ENCODE measurements at regions of chr18 and their contacts with region 1.

Region 1: DNA sequence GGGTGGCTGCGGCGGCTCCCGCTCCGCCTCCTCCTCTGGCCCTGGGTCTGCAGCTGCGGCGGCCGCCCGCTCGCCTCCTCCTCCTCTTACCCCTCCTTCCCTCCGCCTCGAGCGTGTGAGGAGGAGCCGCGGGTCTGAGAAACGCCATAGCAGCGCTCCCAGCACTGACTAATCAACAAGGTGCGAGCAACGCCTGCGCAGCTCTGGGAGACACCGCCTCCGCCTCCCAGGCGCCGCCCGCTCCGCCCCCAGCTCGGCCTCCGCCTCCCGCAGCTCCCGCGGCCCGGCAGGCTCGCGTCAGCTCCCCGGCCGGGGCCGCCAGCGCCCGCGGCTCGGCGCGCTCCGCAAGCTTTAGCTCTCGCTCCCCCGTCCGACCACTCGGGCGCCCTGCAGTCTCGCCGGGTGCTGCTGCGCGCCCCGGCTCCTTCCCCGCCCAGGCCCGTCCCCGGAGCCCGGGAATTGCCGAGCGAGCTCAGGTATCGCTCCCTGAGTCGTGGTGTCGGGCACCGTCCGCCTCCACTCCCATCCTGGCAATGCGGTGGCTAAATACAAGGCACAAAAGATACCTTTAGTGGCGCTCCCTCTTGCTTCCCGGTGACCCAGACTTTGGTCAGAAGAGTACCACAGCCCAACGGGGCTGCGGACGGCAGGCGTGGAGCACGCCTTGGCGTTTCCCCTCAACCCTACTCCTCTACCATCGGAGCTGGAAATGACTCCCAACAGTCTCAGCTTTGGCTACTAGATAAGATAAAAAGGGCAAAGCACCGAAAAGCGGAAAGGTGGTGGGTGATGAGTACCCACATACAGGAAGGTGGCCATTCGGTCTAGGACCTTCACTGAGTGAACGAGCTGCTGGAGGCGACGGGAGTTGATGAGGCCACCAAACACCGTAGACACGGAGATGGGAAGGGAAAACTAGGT is at the start of gene GAREM1:
- DNase-seq: peak; percentile 98
- H3K4me3 ChIP-seq: peak within 1 kb of the TSS; percentile 82 to 87 (median 82)
- H3K27ac ChIP-seq: peak within 1 kb of the TSS; percentile 91 to 94 (median 93)
- H3K4me1 ChIP-seq: peaks cover 0 to 30% (median 20%) of the 10 kb centered on the region in 4 donors
- H3K27me3 ChIP-seq: no peaks in the 10 kb centered on the region
- CTCF ChIP-seq: peak; percentile 33 to 82 (median 42)
- EP300 ChIP-seq: no peak
- POLR2A ChIP-seq: peak; percentile 47 to 64
- total RNA-seq, gene GAREM1: 5.3 to 9.7 (median 6.4) TPM

Region 2: DNA sequence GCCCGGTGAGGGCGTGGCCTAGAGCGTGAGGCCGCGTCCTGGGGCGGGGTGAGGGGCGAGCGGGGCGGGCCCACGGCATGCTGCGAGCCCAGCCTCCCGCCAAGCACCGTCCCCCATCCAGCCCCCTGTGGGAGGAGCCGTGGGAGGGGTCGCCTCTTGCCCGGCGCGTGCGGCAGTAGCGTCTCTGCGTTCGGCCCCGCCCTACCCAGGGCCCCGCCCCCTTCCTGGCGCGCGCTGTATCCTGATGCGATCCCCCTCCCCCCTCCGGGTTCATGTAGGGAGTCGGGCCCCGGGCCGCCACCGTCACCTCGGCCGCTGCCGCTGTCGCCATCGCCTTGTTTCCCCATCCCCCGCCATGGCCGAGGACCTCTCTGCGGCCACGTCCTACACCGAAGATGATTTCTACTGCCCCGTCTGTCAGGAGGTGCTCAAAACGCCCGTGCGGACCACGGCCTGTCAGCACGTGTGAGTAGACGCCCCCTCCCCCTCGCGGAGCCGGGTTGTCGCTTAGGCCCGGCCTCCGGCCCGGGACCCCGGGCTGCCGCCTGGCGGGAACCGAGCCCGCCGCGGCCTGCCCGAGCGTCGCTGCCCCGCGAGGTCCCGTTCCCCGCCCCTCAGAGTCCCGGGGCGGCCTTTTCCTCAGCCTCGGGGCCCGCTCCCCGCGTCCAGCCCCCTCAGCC is 378.4 kb before region 1 on chr18:
- intact Hi-C with region 1: loop called (anchors 2 kb)
- DNase-seq: peak; percentile 100
- H3K4me3 ChIP-seq: peak overlapping the region; percentile 69 to 95 (median 78)
- H3K27ac ChIP-seq: peak overlapping the region; percentile 94 to 100 (median 100)
- H3K4me1 ChIP-seq: peaks cover 0 to 37% (median 21%) of the 10 kb centered on the region in 4 donors
- H3K27me3 ChIP-seq: no peaks in the 10 kb centered on the region
- CTCF ChIP-seq: no peak
- EP300 ChIP-seq: peak in 1 of 4 donors; percentile 37
- POLR2A ChIP-seq: peak; percentile 33 to 54

Region 3: DNA sequence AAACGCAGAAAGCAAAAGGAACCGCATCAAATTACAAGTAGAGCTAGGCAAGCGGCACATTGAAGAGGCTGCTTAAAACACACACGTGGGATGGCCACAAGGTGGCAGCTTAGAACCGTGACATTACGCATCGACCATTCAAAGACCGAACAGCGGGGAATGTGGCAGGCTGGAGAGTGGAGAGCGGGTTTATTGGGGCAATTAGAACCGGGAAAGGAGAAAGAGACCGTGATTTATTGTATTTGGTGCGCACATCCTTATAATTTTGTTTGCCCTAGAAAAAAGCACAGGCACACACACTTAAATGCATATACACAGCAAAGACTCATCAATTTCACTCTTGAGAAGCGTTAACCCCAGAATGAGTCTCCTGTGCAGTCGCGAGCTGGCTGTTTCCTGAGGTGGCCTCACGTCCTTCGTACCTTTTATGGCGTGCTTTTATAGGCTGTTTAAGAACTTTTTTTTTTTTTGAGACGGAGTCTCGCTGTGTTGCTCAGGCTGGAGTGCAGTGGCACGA is 312.8 kb before region 1 on chr18:
- intact Hi-C with region 1: loop called (anchors 2 kb)
- DNase-seq: peak; percentile 87
- H3K4me3 ChIP-seq: peak overlapping the region; percentile 6 to 42 (median 34)
- H3K27ac ChIP-seq: no peak overlapping the region
- H3K4me1 ChIP-seq: peaks cover 0 to 10% (median 2%) of the 10 kb centered on the region in 4 donors
- H3K27me3 ChIP-seq: no peaks in the 10 kb centered on the region
- CTCF ChIP-seq: peak; percentile 71 to 84 (median 82)
- EP300 ChIP-seq: no peak
- POLR2A ChIP-seq: no peak

Region 4: GRCh38 chr18:32271672-32272208 is 199.2 kb before region 1 on chr18:
- intact Hi-C with region 1: loop called (anchors 1 kb)
- DNase-seq: no peak
- H3K4me3 ChIP-seq: no peak overlapping the region
- H3K27ac ChIP-seq: no peak overlapping the region
- H3K4me1 ChIP-seq: peaks cover 0 to 7% (median 0%) of the 10 kb centered on the region in 4 donors
- H3K27me3 ChIP-seq: no peaks in the 10 kb centered on the region
- CTCF ChIP-seq: peak; percentile 57 to 70 (median 60)
- EP300 ChIP-seq: no peak
- POLR2A ChIP-seq: no peak

Region 5: GRCh38 chr18:32289483-32290075 is 181.4 kb before region 1 on chr18:
- intact Hi-C with region 1: loop called (anchors 1 kb)
- DNase-seq: no peak
- H3K4me3 ChIP-seq: no peak overlapping the region
- H3K27ac ChIP-seq: no peak overlapping the region
- H3K4me1 ChIP-seq: no peaks in the 10 kb centered on the region
- H3K27me3 ChIP-seq: no peaks in the 10 kb centered on the region
- CTCF ChIP-seq: peak in 3 of 4 experiments; percentile 38 to 66 (median 55)
- EP300 ChIP-seq: no peak
- POLR2A ChIP-seq: no peak

Region 6: DNA sequence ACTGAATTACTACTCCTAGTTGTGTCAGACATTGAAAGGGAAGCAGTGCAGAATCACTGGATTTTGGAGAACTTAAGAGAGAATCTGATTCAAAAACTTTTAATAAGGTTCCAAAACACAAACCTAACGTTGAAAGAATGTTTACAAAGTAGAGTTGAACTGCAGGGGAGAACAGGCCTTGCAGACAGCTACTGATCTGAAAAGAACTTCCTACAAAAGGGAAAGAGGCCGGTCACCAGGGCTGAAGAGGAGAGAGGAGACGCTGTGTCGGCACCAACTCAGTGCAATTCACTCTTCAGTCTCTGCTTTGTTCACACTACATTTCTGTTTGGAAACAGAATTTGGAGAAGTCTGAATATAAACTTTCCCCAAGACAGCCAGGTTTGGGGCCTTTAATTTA is 124.3 kb before region 1 on chr18:
- intact Hi-C with region 1: loop called (anchors 2 kb)
- DNase-seq: no peak
- H3K4me3 ChIP-seq: no peak overlapping the region
- H3K27ac ChIP-seq: peak overlapping the region; percentile 62 to 80 (median 68)
- H3K4me1 ChIP-seq: peaks cover 0 to 48% (median 41%) of the 10 kb centered on the region in 4 donors
- H3K27me3 ChIP-seq: no peaks in the 10 kb centered on the region
- CTCF ChIP-seq: no peak
- EP300 ChIP-seq: no peak
- POLR2A ChIP-seq: no peak

Region 7: GRCh38 chr18:32552421-32553030 is 81.6 kb after region 1 on chr18:
- intact Hi-C with region 1: loop called (anchors 5 kb)
- DNase-seq: peak; percentile 68
- H3K4me3 ChIP-seq: no peak overlapping the region
- H3K27ac ChIP-seq: no peak overlapping the region
- H3K4me1 ChIP-seq: no peaks in the 10 kb centered on the region
- H3K27me3 ChIP-seq: no peaks in the 10 kb centered on the region
- CTCF ChIP-seq: peak; percentile 56 to 75 (median 66)
- EP300 ChIP-seq: no peak
- POLR2A ChIP-seq: no peak